ENCODE measurements at regions of chr11 and their contacts with region 1.

Region 1: GRCh38 chr11:64390558-64390957 is 31.6 kb downstream of the RPS6KA4 start:
- DNase-seq: no peak
- H3K4me3 Mint-ChIP-seq: no peak overlapping the region
- H3K27ac Mint-ChIP-seq: no peak overlapping the region
- H3K4me1 Mint-ChIP-seq: peaks cover 26% of the 10 kb centered on the region
- H3K27me3 Mint-ChIP-seq: peaks cover 8% of the 10 kb centered on the region

Region 2: GRCh38 chr11:65945430-65945911 is 1554.9 kb after region 1 on chr11 and contains the start of gene TSGA10IP:
- CTCF ChIA-PET with region 1: no interaction called
- POLR2A ChIA-PET with region 1: interaction called, 10 read pairs
- DNase-seq: no peak
- H3K4me3 Mint-ChIP-seq: no peak within 1 kb of the TSS
- H3K27ac Mint-ChIP-seq: no peak within 1 kb of the TSS
- H3K4me1 Mint-ChIP-seq: peaks cover 3% of the 10 kb centered on the region
- H3K27me3 Mint-ChIP-seq: peaks cover 12% of the 10 kb centered on the region
- total RNA-seq, gene TSGA10IP: not detected

Measured in activated CD4-positive, alpha-beta T cell treated with anti-CD3 and anti-CD28 coated beads, Interleukin-2, amount 10 ng/mL, durations not matched to agents 7 days and 5 days (primary cell).